ENCODE measurements at regions of chr15 and their contacts with region 1.

Region 1: GRCh38 chr15:39782441-39783138 is at the start of gene FSIP1:
- DNase-seq: peak; percentile 96
- ATAC-seq: peak; percentile 98
- H3K4me3 ChIP-seq: peak within 1 kb of the TSS; percentile 93
- H3K27ac ChIP-seq: peak within 1 kb of the TSS; percentile 80
- H3K4me1 ChIP-seq: peaks cover 14% of the 10 kb centered on the region
- H3K27me3 ChIP-seq: no peaks in the 10 kb centered on the region
- CTCF ChIP-seq: no peak
- POLR2A ChIP-seq: no peak
- RAD21 ChIP-seq: no peak
- total RNA-seq, gene FSIP1: 0.18 and 0.56 TPM in 2 replicates

Region 2: DNA sequence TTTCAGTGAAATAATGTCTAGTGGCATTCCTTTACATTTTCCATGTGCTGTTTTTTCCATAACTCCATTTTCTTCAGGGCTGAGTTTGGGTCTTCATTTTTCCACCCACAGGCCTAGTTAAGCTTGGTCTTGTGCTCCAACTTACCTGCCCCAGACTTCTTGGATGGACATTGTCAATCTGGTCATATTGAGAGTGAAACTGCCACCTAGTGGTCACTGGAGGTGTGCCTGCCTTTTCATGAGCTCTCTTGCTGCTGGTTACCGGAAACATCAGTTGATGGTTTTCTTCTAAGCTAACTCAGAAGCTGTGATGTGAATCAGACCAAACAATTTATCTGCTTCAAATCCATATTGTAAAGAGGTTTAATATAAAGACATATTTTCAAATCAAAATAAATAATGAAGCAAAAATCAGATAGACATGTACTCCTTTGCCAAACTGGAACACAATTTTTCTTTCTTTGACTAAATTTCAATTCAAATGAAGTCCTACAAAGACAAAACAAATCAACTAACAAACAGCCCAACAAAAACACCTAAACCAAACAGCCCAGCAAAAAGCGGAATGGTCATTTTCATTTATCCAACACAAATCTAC is 1082.9 kb before region 1 on chr15:
- CTCF ChIA-PET with region 1: no interaction called
- POLR2A ChIA-PET with region 1: no interaction called
- dilution Hi-C with region 1: no loop called
- in situ Hi-C with region 1: no loop called
- intact Hi-C with region 1: loop called (anchors 10 kb)
- DNase-seq: peak; percentile 65
- ATAC-seq: peak; percentile 38; the same call in 1 of the 2 replicates
- H3K4me3 ChIP-seq: no peak overlapping the region
- H3K27ac ChIP-seq: no peak overlapping the region
- H3K4me1 ChIP-seq: peaks cover 14% of the 10 kb centered on the region; the same call in 1 of the 2 replicates
- H3K27me3 ChIP-seq: no peaks in the 10 kb centered on the region
- CTCF ChIP-seq: peak; percentile 66
- POLR2A ChIP-seq: no peak
- RAD21 ChIP-seq: peak; percentile 52

Region 3: DNA sequence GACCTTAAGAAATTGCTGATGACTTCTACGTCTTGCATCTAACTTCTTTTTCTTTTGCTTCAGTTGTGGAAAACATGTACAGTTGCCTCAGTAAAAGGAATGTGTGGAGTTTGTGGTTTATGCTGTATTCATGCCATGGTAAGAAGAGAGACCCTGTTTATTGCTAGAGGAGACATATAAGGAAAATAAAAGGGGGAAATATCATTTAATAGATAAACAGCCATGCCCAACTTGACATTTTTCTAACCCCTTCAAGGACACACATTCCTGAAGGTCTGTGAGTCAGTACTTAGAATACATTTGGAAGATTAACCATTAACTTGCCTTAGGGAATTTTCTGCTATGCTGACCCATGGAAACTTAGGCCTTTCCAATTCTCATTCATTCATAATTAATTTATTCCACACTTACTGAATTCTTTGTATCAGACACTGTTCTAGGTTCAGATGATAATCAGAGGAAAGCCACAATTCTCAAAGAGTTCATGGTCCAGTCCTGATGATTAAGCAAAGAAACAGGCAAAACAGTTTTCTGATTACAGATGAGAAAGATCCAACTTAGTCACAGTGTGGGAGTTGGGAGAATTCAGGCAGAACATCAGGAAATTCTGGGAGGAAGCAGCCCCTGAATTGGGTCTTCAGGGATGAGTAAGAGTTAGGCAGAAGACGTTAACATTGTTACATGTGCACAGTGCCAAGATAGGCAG is 888.2 kb before region 1 on chr15:
- CTCF ChIA-PET with region 1: no interaction called
- POLR2A ChIA-PET with region 1: no interaction called
- dilution Hi-C with region 1: no loop called
- in situ Hi-C with region 1: no loop called
- intact Hi-C with region 1: no loop called
- DNase-seq: peak; percentile 96
- ATAC-seq: peak; percentile 71
- H3K4me3 ChIP-seq: no peak overlapping the region
- H3K27ac ChIP-seq: peak overlapping the region; percentile 100; the same call in 1 of the 2 replicates
- H3K4me1 ChIP-seq: peaks cover 21% of the 10 kb centered on the region
- H3K27me3 ChIP-seq: no peaks in the 10 kb centered on the region
- CTCF ChIP-seq: no peak
- POLR2A ChIP-seq: no peak
- RAD21 ChIP-seq: no peak

Region 4: GRCh38 chr15:39959411-39959810 is 176.8 kb after region 1 on chr15:
- CTCF ChIA-PET with region 1: no interaction called
- POLR2A ChIA-PET with region 1: no interaction called
- dilution Hi-C with region 1: no loop called
- in situ Hi-C with region 1: loop called (anchors 10 kb)
- intact Hi-C with region 1: loop called (anchors 5 kb)
- DNase-seq: peak; percentile 42
- ATAC-seq: peak; percentile 44
- H3K4me3 ChIP-seq: no peak overlapping the region
- H3K27ac ChIP-seq: no peak overlapping the region
- H3K4me1 ChIP-seq: peaks cover 2% of the 10 kb centered on the region; the same call in 1 of the 2 replicates
- H3K27me3 ChIP-seq: no peaks in the 10 kb centered on the region
- CTCF ChIP-seq: peak; percentile 16; the same call in 1 of the 2 replicates
- POLR2A ChIP-seq: no peak
- RAD21 ChIP-seq: no peak

Region 5: GRCh38 chr15:39976291-39977274 is 194.0 kb after region 1 on chr15:
- CTCF ChIA-PET with region 1: no interaction called
- POLR2A ChIA-PET with region 1: no interaction called
- dilution Hi-C with region 1: no loop called
- in situ Hi-C with region 1: no loop called
- intact Hi-C with region 1: loop called (anchors 2 kb)
- DNase-seq: peak; percentile 52
- ATAC-seq: peak; percentile 93
- H3K4me3 ChIP-seq: peak overlapping the region; percentile 50
- H3K27ac ChIP-seq: peak overlapping the region; percentile 45
- H3K4me1 ChIP-seq: peaks cover 6% of the 10 kb centered on the region
- H3K27me3 ChIP-seq: no peaks in the 10 kb centered on the region
- CTCF ChIP-seq: peak; percentile 51
- POLR2A ChIP-seq: no peak
- RAD21 ChIP-seq: peak; percentile 41

Region 6: GRCh38 chr15:40002295-40002694 is 219.7 kb after region 1 on chr15:
- CTCF ChIA-PET with region 1: no interaction called
- POLR2A ChIA-PET with region 1: no interaction called
- dilution Hi-C with region 1: no loop called
- in situ Hi-C with region 1: no loop called
- intact Hi-C with region 1: loop called (anchors 10 kb)
- DNase-seq: peak; percentile 65
- ATAC-seq: peak; percentile 51
- H3K4me3 ChIP-seq: no peak overlapping the region
- H3K27ac ChIP-seq: peak overlapping the region; percentile 40; the same call in 1 of the 2 replicates
- H3K4me1 ChIP-seq: peaks cover 11% of the 10 kb centered on the region
- H3K27me3 ChIP-seq: no peaks in the 10 kb centered on the region
- CTCF ChIP-seq: no peak
- POLR2A ChIP-seq: no peak
- RAD21 ChIP-seq: no peak

Region 7: GRCh38 chr15:40038638-40039543 is 256.3 kb after region 1 on chr15 and contains the start of gene SRP14:
- CTCF ChIA-PET with region 1: no interaction called
- POLR2A ChIA-PET with region 1: no interaction called
- dilution Hi-C with region 1: no loop called
- in situ Hi-C with region 1: no loop called
- intact Hi-C with region 1: loop called (anchors 1 kb)
- DNase-seq: peak; percentile 91
- ATAC-seq: peak; percentile 95
- H3K4me3 ChIP-seq: peak within 1 kb of the TSS; percentile 83
- H3K27ac ChIP-seq: peak within 1 kb of the TSS; percentile 98
- H3K4me1 ChIP-seq: peaks cover 3% of the 10 kb centered on the region; the same call in 1 of the 2 replicates
- H3K27me3 ChIP-seq: no peaks in the 10 kb centered on the region
- CTCF ChIP-seq: no peak
- POLR2A ChIP-seq: peak; percentile 90
- RAD21 ChIP-seq: no peak
- total RNA-seq, gene SRP14: 106 and 205 TPM in 2 replicates

Region 8: GRCh38 chr15:40108855-40109735 is 326.5 kb after region 1 on chr15 and contains the start of gene BMF:
- CTCF ChIA-PET with region 1: no interaction called
- POLR2A ChIA-PET with region 1: no interaction called
- dilution Hi-C with region 1: no loop called
- in situ Hi-C with region 1: no loop called
- intact Hi-C with region 1: loop called (anchors 10 kb)
- DNase-seq: peak; percentile 99
- ATAC-seq: peak; percentile 84
- H3K4me3 ChIP-seq: peak within 1 kb of the TSS; percentile 63
- H3K27ac ChIP-seq: no peak within 1 kb of the TSS; the same call in 1 of the 2 replicates
- H3K4me1 ChIP-seq: peaks cover 19% of the 10 kb centered on the region
- H3K27me3 ChIP-seq: peaks cover 17% of the 10 kb centered on the region
- CTCF ChIP-seq: peak; percentile 40
- POLR2A ChIP-seq: no peak; the same call in 1 of the 2 replicates
- RAD21 ChIP-seq: 0 out of 2 replicates have a peak, but pooled peaks have one; percentile 25
- total RNA-seq, gene BMF: 1.7 and 2.9 TPM in 2 replicates